Heart left ventricle (tissue), 16 donors: ENCODE measurements at regions of chr5 and their contacts with region 1.

Region 1: DNA sequence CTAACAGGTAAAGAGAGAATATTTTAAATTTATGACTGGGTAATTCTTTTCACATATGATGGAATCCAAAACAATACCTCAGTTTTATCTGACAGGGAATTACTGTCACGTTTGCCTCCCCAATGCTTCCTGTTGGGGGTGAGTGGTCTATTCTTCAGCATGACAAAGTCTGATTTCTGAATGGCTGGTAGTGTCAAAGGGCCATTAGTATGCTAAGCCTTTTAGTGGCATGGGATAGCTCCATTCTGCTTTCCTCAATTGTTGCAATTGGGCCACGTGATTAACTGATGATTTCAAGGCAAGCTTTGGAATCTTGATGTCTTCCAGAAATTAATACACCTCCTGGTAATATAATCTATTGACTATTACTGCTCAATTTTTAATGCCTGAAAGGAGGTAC is 14.7 kb upstream of the NDUFS4 start:
- DNase-seq: no peak
- ATAC-seq: no peak
- H3K4me3 ChIP-seq: no peak overlapping the region
- H3K27ac ChIP-seq: no peak overlapping the region
- H3K4me1 ChIP-seq: no peaks in the 10 kb centered on the region
- H3K27me3 ChIP-seq: no peaks in the 10 kb centered on the region
- CTCF ChIP-seq: no peak
- POLR2A ChIP-seq: no peak

Region 2: GRCh38 chr5:53603009-53603687 is 57.4 kb after region 1 on chr5:
- intact Hi-C with region 1: no loop called
- DNase-seq: peak in 2 of 5 donors; percentile 25 to 61
- ATAC-seq: peak; percentile 89 to 97 (median 94)
- H3K4me3 ChIP-seq: no peak overlapping the region
- H3K27ac ChIP-seq: peak overlapping the region in 1 of 12 donors; percentile 25
- H3K4me1 ChIP-seq: peaks cover 4 to 33% (median 13%) of the 10 kb centered on the region in 12 donors
- H3K27me3 ChIP-seq: no peaks in the 10 kb centered on the region
- CTCF ChIP-seq: no peak
- POLR2A ChIP-seq: no peak

Region 3: GRCh38 chr5:53834500-53834899 is 288.8 kb after region 1 on chr5:
- intact Hi-C with region 1: loop called in 1 of 10 experiments (anchors 5 kb)
- DNase-seq: no peak
- ATAC-seq: no peak
- H3K4me3 ChIP-seq: no peak overlapping the region
- H3K27ac ChIP-seq: no peak overlapping the region
- H3K4me1 ChIP-seq: no peaks in the 10 kb centered on the region
- H3K27me3 ChIP-seq: no peaks in the 10 kb centered on the region
- CTCF ChIP-seq: no peak
- POLR2A ChIP-seq: no peak